ENCODE measurements at regions of chr12 and their contacts with region 1.

Region 1: DNA sequence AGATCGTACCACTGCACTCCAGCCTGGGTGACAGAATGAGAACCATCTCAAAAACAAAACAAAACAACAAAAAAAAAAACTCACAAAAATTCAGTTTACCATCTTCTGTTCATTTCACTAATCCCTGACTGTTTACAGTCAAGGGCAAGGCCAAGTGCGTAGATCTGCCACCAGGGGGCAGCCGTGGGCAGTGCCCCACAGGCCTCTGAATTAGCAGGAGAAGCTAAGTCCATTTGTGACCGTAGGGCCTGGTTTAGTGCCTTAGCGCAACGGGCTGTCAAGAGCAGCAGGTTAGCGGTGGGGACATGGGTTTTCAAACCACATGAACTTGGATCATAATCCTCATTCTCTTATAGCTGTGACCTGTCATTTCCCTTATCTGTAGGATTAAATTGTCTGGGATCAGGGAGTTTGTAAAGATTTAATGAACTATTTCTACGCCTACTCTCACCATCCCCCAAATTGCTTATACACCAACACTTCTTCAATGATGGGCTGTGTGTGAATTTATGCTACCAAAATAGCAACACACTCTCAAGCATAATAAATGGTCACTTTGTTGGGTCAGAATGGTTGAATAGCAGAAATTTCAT is 49.0 kb downstream of the KCTD10 start:
- DNase-seq: peak; percentile 86
- H3K4me3 Mint-ChIP-seq: no peak overlapping the region
- H3K27ac Mint-ChIP-seq: no peak overlapping the region
- H3K4me1 Mint-ChIP-seq: peaks cover 9% of the 10 kb centered on the region
- H3K27me3 Mint-ChIP-seq: peaks cover 33% of the 10 kb centered on the region
- CTCF ChIP-seq: peak; percentile 91

Region 2: DNA sequence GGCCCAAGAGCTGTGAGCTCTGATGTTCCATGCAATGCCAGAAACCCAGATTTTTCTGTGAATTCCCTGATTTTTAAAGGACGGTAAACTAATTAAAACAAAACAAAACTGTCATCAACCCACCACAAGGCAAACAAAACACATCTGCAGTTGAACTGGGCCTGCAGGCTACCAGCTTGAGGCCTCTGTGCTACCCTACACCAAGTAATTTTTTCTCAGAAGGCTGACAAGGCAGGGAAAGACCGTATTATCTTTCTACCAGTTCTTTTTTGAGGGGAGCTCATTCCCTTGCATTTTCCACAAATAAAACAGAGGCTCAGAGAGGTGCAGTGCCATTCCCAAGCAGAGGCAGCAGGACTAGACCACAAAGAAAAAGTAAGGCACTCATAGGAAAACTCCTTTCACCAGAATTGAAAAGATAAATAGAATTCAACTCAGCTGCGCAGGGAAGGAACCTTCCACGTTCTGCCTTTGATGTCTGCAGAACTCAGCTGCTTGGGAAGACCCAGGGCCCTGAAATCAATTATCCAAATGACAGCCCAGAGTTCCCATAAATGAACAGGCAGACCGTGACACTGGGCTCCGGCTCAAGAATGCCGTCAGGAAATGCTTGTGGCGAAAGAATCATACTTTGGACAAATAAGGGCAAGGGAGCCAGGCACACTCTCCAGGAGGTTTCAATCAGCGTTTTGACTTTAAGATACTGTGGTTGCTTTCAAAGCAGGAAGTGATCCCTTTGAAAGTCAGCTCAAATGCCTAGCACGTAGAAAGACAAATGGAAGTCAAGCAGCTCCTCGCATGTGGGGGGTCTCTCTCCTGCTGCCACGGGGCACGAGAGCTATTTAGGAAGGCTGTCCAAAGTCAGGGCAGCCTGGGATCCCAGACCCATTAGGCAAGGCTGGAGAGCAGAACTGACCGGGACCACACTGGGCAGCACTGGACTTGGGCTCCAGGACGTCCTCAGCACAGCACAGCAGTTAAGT is 34.9 kb after region 1 on chr12:
- CTCF ChIA-PET with region 1: interaction called, 11 read pairs
- intact Hi-C with region 1: loop called (anchors 2 kb)
- DNase-seq: peak; percentile 75
- H3K4me3 Mint-ChIP-seq: peak overlapping the region; percentile 49
- H3K27ac Mint-ChIP-seq: peak overlapping the region; percentile 87
- H3K4me1 Mint-ChIP-seq: peaks cover 47% of the 10 kb centered on the region
- H3K27me3 Mint-ChIP-seq: no peaks in the 10 kb centered on the region
- CTCF ChIP-seq: no peak

Region 3: GRCh38 chr12:109477185-109477962 is 49.2 kb after region 1 on chr12 and contains the starts of genes KCTD10 and UBE3B:
- CTCF ChIA-PET with region 1: interaction called, 6 read pairs
- intact Hi-C with region 1: loop called (anchors 5 kb)
- DNase-seq: peak; percentile 93
- H3K4me3 Mint-ChIP-seq: peak within 1 kb of the TSS; percentile 94
- H3K27ac Mint-ChIP-seq: peak within 1 kb of the TSS; percentile 95
- H3K4me1 Mint-ChIP-seq: peaks cover 11% of the 10 kb centered on the region
- H3K27me3 Mint-ChIP-seq: no peaks in the 10 kb centered on the region
- CTCF ChIP-seq: no peak
- total RNA-seq, gene KCTD10: 56.7 and 59.0 TPM in 2 replicates
- total RNA-seq, gene UBE3B: 48.6 and 59.2 TPM in 2 replicates

Region 4: GRCh38 chr12:109597795-109598427 is 169.8 kb after region 1 on chr12:
- CTCF ChIA-PET with region 1: no interaction called
- intact Hi-C with region 1: loop called (anchors 5 kb)
- DNase-seq: peak; percentile 93
- H3K4me3 Mint-ChIP-seq: no peak overlapping the region
- H3K27ac Mint-ChIP-seq: no peak overlapping the region
- H3K4me1 Mint-ChIP-seq: no peaks in the 10 kb centered on the region
- H3K27me3 Mint-ChIP-seq: no peaks in the 10 kb centered on the region
- CTCF ChIP-seq: peak; percentile 94